ENCODE measurements at regions of chr11 and their contacts with region 1.

Region 1: GRCh38 chr11:35305670-35306382 is 113.5 kb downstream of the SLC1A2 start:
- DNase-seq: no peak
- ATAC-seq: peak; percentile 90
- H3K4me3 ChIP-seq: no peak overlapping the region
- H3K27ac ChIP-seq: no peak overlapping the region
- H3K4me1 ChIP-seq: peaks cover 19% of the 10 kb centered on the region
- H3K27me3 ChIP-seq: no peaks in the 10 kb centered on the region
- CTCF ChIP-seq: peak; percentile 68 to 76 (median 71)
- EP300 ChIP-seq: 0 out of 4 replicates have a peak, but pooled peaks of 1 of the 2 experiments have one; percentile 27
- POLR2A ChIP-seq: no peak
- RAD21 ChIP-seq: peak; percentile 93

Region 2: DNA sequence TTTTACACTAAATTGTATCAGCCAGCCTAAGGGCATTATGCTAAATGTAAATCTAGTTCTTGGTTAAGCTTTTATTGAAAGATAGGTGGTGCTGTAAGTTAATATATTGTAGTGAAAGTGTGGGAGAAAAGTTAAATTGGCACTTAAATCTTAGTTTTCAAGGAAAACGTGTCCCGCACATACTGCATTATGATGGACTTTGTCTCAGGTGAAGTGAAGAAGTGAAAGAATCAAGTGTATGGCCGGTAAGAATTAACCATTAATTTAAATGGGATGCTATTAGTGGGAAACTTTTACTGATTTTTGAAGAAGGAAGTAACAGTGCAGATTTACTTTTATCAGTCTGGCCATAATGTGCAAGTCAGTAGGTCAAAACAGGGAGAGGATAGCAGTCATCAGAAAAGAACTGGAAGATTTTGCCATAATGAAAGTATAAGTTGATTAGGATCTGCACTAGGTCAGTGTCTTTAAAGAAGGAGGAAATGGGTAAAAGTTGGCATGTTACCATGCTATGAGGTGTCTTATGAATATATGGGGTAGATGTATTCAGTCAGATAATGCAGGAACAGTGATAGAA is 307.8 kb before region 1 on chr11:
- CTCF ChIA-PET with region 1: interaction called, 30 read pairs
- POLR2A ChIA-PET with region 1: no interaction called
- RAD21 ChIA-PET with region 1: interaction called, 21 read pairs
- SMC1A ChIA-PET with region 1: interaction called, 36 read pairs
- in situ Hi-C with region 1: no loop called
- intact Hi-C with region 1: loop called (anchors 1 kb)
- DNase-seq: no peak
- ATAC-seq: peak; percentile 74
- H3K4me3 ChIP-seq: no peak overlapping the region
- H3K27ac ChIP-seq: no peak overlapping the region
- H3K4me1 ChIP-seq: peaks cover 8% of the 10 kb centered on the region; the same call in 1 of the 2 replicates
- H3K27me3 ChIP-seq: no peaks in the 10 kb centered on the region
- CTCF ChIP-seq: peak; percentile 24 to 62 (median 41); a peak in 5 of 6 replicates
- EP300 ChIP-seq: no peak
- POLR2A ChIP-seq: no peak
- RAD21 ChIP-seq: peak; percentile 62

Region 3: DNA sequence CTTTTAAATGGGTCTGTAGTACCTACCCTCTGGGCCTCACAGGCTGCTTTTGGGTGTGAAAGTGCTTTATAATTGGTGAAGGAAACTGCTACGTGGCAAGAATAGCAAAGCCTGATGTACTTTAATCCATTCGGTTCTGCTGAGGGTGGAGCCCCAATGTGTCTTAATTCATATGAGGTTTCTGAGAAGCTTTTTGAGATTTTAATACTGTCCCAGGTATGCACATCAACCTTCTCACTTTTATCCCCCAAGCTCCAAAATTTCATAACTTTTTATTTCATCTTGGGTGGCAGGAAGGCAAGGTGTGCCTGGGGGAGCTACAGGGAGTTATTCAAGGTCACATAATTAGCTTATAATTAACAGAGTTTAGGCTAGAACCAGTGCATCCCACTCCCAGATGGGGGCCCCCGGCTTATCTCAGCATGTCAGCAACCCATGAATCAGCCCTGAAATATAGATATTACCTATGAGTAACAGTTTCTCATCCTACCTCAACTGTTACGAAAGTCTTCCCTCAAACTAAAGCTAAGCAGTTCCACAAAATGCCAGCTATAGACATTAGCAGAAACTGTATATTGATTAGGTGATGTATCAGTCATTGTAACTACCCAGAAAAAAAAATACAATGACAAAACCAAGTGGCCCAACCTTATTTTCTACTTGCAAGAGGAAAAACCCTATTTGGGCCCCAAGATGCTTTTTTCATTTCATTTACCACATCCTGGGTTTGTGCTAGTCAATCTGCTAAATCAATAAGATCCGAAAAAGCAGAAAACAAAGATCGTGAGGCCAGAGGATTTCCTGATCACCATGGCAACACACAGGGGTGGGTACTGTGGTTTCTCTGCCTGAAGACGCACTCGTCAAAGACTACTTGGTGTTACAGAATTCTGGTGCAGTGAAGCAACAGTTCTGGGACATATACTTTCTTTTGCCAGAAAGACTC is 140.1 kb before region 1 on chr11:
- CTCF ChIA-PET with region 1: interaction called, 26 read pairs
- POLR2A ChIA-PET with region 1: no interaction called
- RAD21 ChIA-PET with region 1: interaction called, 14 read pairs
- SMC1A ChIA-PET with region 1: interaction called, 27 read pairs
- in situ Hi-C with region 1: no loop called
- intact Hi-C with region 1: no loop called
- DNase-seq: peak; percentile 99
- ATAC-seq: peak; percentile 85
- H3K4me3 ChIP-seq: peak overlapping the region; percentile 53
- H3K27ac ChIP-seq: peak overlapping the region; percentile 72
- H3K4me1 ChIP-seq: peaks cover 54% of the 10 kb centered on the region
- H3K27me3 ChIP-seq: no peaks in the 10 kb centered on the region
- CTCF ChIP-seq: no peak
- EP300 ChIP-seq: peak; percentile 60 to 86; a peak in 3 of 4 replicates
- POLR2A ChIP-seq: peak; percentile 41; the same call in 1 of the 2 replicates
- RAD21 ChIP-seq: no peak

Region 4: GRCh38 chr11:35246745-35247144 is 59.1 kb before region 1 on chr11:
- CTCF ChIA-PET with region 1: interaction called, 98 read pairs
- POLR2A ChIA-PET with region 1: no interaction called
- RAD21 ChIA-PET with region 1: interaction called, 8 read pairs
- SMC1A ChIA-PET with region 1: interaction called, 14 read pairs
- in situ Hi-C with region 1: no loop called
- intact Hi-C with region 1: no loop called
- DNase-seq: no peak
- ATAC-seq: no peak
- H3K4me3 ChIP-seq: no peak overlapping the region
- H3K27ac ChIP-seq: no peak overlapping the region
- H3K4me1 ChIP-seq: no peaks in the 10 kb centered on the region
- H3K27me3 ChIP-seq: no peaks in the 10 kb centered on the region
- CTCF ChIP-seq: no peak
- EP300 ChIP-seq: no peak
- POLR2A ChIP-seq: no peak
- RAD21 ChIP-seq: no peak

Region 5: GRCh38 chr11:35272391-35272902 is 33.4 kb before region 1 on chr11:
- CTCF ChIA-PET with region 1: interaction called, 14 read pairs
- POLR2A ChIA-PET with region 1: no interaction called
- RAD21 ChIA-PET with region 1: interaction called, 16 read pairs
- SMC1A ChIA-PET with region 1: interaction called, 23 read pairs
- in situ Hi-C with region 1: no loop called
- intact Hi-C with region 1: no loop called
- DNase-seq: peak; percentile 95
- ATAC-seq: peak; percentile 94
- H3K4me3 ChIP-seq: 0 out of 2 replicates have a peak overlapping the region, but pooled peaks have one; percentile 7
- H3K27ac ChIP-seq: peak overlapping the region; percentile 56
- H3K4me1 ChIP-seq: peaks cover 22% of the 10 kb centered on the region
- H3K27me3 ChIP-seq: no peaks in the 10 kb centered on the region
- CTCF ChIP-seq: peak; percentile 5 to 12 (median 10); a peak in 3 of 6 replicates
- EP300 ChIP-seq: peak; percentile 57 to 70; a peak in 2 of 4 replicates
- POLR2A ChIP-seq: no peak
- RAD21 ChIP-seq: peak; percentile 22; the same call in 1 of the 2 replicates